GM10248 (cell line): ENCODE measurements at regions of chr6 and their contacts with region 1.

Region 1: DNA sequence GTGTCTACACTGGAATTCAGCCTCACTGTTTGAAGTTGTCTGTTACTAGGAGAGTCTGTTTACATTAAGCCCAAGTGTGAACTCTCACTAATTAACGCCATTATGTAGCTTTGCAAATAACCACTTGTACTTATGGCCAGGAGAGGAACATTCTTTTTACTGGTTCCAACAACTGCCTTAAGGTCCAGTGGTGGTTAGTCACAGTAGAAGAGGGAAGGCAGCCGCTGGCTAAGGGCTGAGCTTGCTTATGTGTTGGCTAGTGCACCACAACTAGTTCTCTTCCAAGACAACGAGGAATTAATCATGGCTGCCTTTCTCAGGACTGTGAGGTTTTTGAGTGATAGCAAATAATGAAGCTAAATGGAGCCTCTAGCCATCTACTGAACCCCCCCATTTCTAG is 14.9 kb upstream of the SLC22A23 start:
- DNase-seq: no peak
- CTCF ChIP-seq: no peak

Region 2: GRCh38 chr6:3458706-3459421 is 12.8 kb before region 1 on chr6:
- CTCF ChIA-PET with region 1: interaction called, 16 read pairs
- POLR2A ChIA-PET with region 1: no interaction called
- DNase-seq: no peak
- CTCF ChIP-seq: no peak